K562 (cell line): ENCODE measurements at regions of chr2 and their contacts with region 1.

Region 1: GRCh38 chr2:21317131-21317530 is 193.4 kb downstream of the TDRD15 start:
- DNase-seq: peak; percentile 66 to 81 (median 68)
- ATAC-seq: peak; percentile 93
- H3K4me3 ChIP-seq: no peak overlapping the region
- H3K27ac ChIP-seq: no peak overlapping the region
- H3K4me1 ChIP-seq: no peaks in the 10 kb centered on the region; a peak in 1 of 5 replicates
- H3K27me3 ChIP-seq: no peaks in the 10 kb centered on the region
- CTCF ChIP-seq: peak; percentile 62 to 75 (median 71)
- EP300 ChIP-seq: no peak
- POLR2A ChIP-seq: no peak
- RAD21 ChIP-seq: peak; percentile 80 to 85

Region 2: GRCh38 chr2:21228041-21228895 is 88.9 kb before region 1 on chr2:
- CTCF ChIA-PET with region 1: no interaction called
- POLR2A ChIA-PET with region 1: no interaction called
- in situ Hi-C with region 1: no loop called
- intact Hi-C with region 1: loop called (anchors 1 kb)
- DNase-seq: peak; percentile 82 to 93 (median 84)
- ATAC-seq: peak; percentile 95
- H3K4me3 ChIP-seq: no peak overlapping the region
- H3K27ac ChIP-seq: peak overlapping the region; percentile 75
- H3K4me1 ChIP-seq: peaks cover 0 to 22% of the 10 kb centered on the region in 2 experiments; a peak in 3 of 5 replicates
- H3K27me3 ChIP-seq: no peaks in the 10 kb centered on the region
- CTCF ChIP-seq: peak in 1 of 3 experiments; percentile 18; a peak in 1 of 6 replicates
- EP300 ChIP-seq: peak; percentile 88
- POLR2A ChIP-seq: no peak
- RAD21 ChIP-seq: peak in 1 of 2 experiments; percentile 52; a peak in 3 of 4 replicates